Breast epithelium (tissue), 4 donors: ENCODE measurements at regions of chr3 and their contacts with region 1.

Region 1: GRCh38 chr3:72238010-72238691 is 453.2 kb upstream of the PROK2 start:
- DNase-seq: no peak
- H3K4me3 ChIP-seq: no peak overlapping the region
- H3K27ac ChIP-seq: peak overlapping the region in 1 of 2 donors; percentile 63
- H3K4me1 ChIP-seq: peaks cover 0 to 11% of the 10 kb centered on the region in 2 donors
- H3K27me3 ChIP-seq: no peaks in the 10 kb centered on the region
- CTCF ChIP-seq: no peak
- POLR2A ChIP-seq: no peak

Region 2: DNA sequence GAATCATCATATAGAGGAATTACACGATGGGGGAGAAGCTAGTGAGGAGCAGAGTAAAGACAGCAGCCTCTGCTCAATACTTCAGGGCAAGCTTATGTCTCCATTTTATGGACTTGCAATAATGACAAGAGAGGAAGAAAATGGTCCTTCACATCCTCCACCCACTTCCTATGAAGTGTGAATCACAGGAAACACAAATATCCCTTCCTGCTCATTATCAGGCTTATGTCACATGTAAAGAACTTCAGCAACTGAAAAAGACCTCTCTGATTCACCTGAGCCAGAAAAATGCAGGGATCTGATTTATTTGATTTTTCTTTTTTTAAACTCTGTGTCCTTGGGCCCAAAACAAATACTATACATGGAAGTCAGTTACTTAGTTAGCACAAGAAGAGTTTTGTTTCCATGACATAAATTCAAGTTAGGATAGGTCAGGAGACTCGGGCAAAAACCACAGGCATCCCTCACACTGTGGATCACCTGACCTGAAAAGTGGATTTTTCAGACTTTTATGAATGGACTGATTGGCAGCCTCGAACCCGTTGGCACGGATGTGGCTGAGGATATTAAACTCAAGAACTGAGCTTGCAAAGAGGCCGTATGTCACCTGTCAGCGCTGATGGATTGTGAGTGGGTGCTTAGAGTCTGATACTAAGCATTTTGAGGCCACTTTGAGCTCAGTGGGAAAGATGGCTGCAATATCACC is 1304.9 kb before region 1 on chr3:
- intact Hi-C with region 1: loop called (anchors 5 kb)
- DNase-seq: no peak
- H3K4me3 ChIP-seq: no peak overlapping the region
- H3K27ac ChIP-seq: no peak overlapping the region
- H3K4me1 ChIP-seq: no peaks in the 10 kb centered on the region
- H3K27me3 ChIP-seq: no peaks in the 10 kb centered on the region
- CTCF ChIP-seq: no peak
- POLR2A ChIP-seq: no peak

Region 3: GRCh38 chr3:72274493-72275330 is 36.6 kb after region 1 on chr3:
- intact Hi-C with region 1: no loop called
- DNase-seq: no peak
- H3K4me3 ChIP-seq: peak overlapping the region in 1 of 3 donors; percentile 29
- H3K27ac ChIP-seq: peak overlapping the region in 1 of 2 donors; percentile 16
- H3K4me1 ChIP-seq: no peaks in the 10 kb centered on the region
- H3K27me3 ChIP-seq: no peaks in the 10 kb centered on the region
- CTCF ChIP-seq: no peak
- POLR2A ChIP-seq: no peak

Region 4: DNA sequence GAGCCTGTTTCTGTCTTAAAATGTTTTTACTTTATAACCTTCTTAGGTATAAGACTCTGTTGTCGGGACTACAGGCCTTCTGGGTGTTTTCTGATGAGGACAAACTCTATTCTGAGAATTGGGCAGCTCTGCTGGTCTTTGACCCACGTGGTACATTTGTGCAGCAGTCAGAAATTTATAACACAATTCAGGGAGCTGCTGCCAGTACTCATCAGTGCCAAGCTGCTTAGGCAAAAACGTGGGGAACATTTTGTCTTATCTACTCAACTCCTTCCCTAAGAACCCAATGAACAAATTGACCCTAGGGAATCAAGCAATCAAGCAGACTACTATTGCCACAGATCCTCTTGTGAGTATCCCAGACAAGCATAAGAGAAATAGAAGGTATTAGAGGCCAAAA is 1567.3 kb after region 1 on chr3:
- intact Hi-C with region 1: loop called (anchors 5 kb)
- DNase-seq: peak in 1 of 2 donors; percentile 71
- H3K4me3 ChIP-seq: no peak overlapping the region
- H3K27ac ChIP-seq: peak overlapping the region; percentile 8 to 15
- H3K4me1 ChIP-seq: no peaks in the 10 kb centered on the region
- H3K27me3 ChIP-seq: no peaks in the 10 kb centered on the region
- CTCF ChIP-seq: no peak
- POLR2A ChIP-seq: no peak